Activated T-helper 2 cell treated with anti-CD3 and anti-CD28 coated beads, Interferon-gamma antibody, Interleukin-2, Interleukin-4, amounts not matched to agents 10 μg/mL and 5 μg/mL and 100 μg/mL, durations not matched to agents 14 hours and 24 hours and 36 hours (primary cell): ENCODE measurements at regions of chr5 and their contacts with region 1.

Region 1: GRCh38 chr5:179550511-179551230 is at the start of gene RUFY1:
- DNase-seq: peak; percentile 82
- H3K4me3 Mint-ChIP-seq: peak within 1 kb of the TSS; percentile 98
- H3K27ac Mint-ChIP-seq: peak within 1 kb of the TSS; percentile 100
- H3K4me1 Mint-ChIP-seq: peaks cover 22% of the 10 kb centered on the region
- H3K27me3 Mint-ChIP-seq: no peaks in the 10 kb centered on the region
- total RNA-seq, gene RUFY1: 40.2 and 42.0 TPM in 2 replicates

Region 2: DNA sequence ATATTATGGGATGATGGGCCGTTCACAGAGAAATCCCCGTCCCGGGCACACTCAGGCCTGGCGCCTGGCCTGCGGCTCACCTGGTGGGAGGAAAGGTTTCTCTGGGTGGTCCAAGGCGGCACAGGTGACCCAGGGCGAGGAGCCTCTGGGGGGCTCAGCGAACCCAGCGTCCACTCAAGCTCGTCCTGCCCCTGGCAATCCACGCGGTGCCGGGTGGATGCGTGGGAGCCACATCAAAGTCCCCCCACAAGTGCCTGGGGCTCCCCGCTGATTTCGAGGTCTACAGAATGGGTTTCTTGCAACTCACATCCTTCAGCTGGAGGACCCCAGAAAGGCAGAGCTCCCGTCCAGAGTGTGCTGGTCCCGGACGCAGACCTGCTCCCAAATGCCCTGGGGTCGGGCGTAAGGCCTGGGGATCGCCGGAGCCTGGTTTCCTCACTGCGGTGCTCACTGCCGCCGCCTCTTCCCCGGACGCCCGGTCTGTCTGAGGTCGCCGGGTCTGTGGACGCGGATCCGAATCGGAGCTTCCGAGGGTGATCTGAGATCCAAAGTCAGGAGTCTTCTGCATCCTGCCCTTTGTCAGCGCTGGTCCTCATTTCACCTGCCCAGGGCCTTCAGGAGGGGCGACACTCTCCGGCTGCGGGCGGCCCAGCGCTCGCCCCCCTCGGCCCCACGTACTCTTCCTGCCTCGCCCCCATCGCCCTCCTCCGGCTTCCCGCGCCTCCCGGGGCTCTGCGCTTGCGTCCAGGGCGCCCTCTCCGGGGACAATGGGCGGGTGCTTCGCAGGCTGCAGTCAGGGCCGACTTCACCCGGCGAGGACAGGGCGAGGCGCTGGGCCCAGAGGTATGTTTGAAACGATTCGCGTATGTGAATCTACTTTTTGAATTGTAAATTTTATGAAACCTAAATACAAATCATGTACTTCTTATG is 20.3 kb before region 1 on chr5:
- intact Hi-C with region 1: loop called (anchors 2 kb)
- DNase-seq: peak; percentile 51
- H3K4me3 Mint-ChIP-seq: peak overlapping the region; percentile 37
- H3K27ac Mint-ChIP-seq: no peak overlapping the region
- H3K4me1 Mint-ChIP-seq: peaks cover 11% of the 10 kb centered on the region
- H3K27me3 Mint-ChIP-seq: peaks cover 4% of the 10 kb centered on the region

Region 3: GRCh38 chr5:179679014-179679674 is 128.5 kb after region 1 on chr5:
- intact Hi-C with region 1: no loop called
- DNase-seq: peak; percentile 61
- H3K4me3 Mint-ChIP-seq: peak overlapping the region; percentile 96
- H3K27ac Mint-ChIP-seq: peak overlapping the region; percentile 96
- H3K4me1 Mint-ChIP-seq: peaks cover 27% of the 10 kb centered on the region
- H3K27me3 Mint-ChIP-seq: no peaks in the 10 kb centered on the region

Region 4: DNA sequence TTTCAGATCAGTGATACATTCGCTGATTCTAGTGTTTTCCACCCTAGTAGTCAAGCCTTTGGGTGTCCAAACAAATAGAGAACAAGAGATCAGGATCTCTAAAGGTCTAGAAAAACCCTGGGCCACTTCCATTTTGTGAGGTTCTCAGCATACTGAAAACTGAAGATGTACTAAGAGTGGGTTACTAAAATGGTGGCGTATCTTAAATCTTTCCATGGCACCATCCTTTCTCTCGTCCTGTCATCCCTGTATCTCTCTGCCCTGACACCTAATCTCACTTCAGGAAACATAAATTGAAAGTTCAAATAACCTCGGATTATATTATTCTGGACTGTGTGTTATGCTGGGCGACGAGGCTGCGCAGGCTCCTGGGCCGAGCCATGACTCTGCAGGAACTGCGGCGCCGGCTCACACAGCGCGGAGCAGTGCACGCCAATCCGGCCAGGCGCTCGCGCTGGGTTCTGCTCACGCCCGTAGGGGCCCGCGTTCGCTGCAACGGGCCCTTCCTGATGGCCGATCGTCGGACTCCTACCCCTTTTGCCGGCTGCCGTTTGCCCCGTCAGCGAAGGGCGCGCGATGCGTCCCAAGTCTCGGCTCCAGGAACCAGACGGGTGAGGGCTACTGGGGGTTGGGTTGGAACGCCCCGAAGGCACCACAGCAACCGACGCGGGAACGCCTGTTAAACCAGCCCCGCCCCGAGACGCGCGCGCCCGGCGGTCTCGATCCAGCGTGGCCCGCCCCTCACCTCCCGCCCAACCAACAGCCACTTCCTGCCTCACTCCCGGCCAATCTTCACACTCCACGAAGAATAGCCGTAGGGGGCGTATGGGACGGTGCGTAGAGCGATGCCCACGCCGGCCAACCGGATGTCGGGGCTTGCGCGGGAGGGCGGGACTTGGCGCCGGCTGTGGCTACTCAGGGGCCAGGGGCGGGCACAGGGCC is 147.6 kb after region 1 on chr5:
- intact Hi-C with region 1: loop called (anchors 1 kb)
- DNase-seq: peak; percentile 99
- H3K4me3 Mint-ChIP-seq: peak overlapping the region; percentile 99
- H3K27ac Mint-ChIP-seq: peak overlapping the region; percentile 100
- H3K4me1 Mint-ChIP-seq: peaks cover 28% of the 10 kb centered on the region
- H3K27me3 Mint-ChIP-seq: no peaks in the 10 kb centered on the region